ENCODE measurements at regions of chr12 and their contacts with region 1.

Region 1: DNA sequence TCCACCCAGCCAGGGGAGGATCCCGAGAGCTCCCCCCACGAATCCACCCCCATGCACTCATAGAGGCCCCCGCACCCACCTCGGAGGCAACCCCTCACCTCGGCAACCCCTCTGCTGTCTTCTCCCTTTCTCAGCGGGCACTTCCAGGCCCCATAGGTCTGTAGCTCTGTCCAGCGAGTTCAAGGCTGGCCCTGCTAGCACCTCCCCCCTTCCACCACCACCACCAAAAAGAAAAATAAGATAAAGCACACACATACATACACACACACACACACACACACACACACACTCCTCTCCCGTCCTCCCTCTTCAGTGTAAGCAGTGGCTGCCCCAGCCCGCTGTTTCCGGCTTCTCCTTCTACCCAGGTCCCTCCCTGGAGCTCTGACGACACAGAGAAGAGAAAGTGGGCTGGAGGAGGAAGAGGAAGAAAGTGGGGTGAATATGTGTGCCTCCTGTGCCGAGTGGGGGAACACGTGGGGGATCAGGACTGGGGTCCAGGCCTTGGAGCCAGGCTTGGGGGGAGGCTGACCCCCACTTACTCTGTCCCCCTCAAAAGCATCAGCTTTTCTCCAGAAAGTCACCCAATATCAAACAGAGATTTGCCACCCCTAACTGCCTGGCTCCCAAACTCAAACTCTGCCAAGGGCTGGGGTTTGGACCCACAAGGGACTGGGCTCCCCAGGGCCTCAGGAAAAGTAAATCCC is at the start of gene STAT6:
- DNase-seq: peak; percentile 91
- ATAC-seq: peak; percentile 57
- H3K4me3 Mint-ChIP-seq: peak within 1 kb of the TSS; percentile 98
- H3K27ac Mint-ChIP-seq: peak within 1 kb of the TSS; percentile 99
- H3K4me1 Mint-ChIP-seq: peaks cover 48% of the 10 kb centered on the region
- H3K27me3 Mint-ChIP-seq: no peaks in the 10 kb centered on the region
- CTCF ChIP-seq: no peak
- total RNA-seq, gene STAT6: 207 to 209 TPM

Region 2: DNA sequence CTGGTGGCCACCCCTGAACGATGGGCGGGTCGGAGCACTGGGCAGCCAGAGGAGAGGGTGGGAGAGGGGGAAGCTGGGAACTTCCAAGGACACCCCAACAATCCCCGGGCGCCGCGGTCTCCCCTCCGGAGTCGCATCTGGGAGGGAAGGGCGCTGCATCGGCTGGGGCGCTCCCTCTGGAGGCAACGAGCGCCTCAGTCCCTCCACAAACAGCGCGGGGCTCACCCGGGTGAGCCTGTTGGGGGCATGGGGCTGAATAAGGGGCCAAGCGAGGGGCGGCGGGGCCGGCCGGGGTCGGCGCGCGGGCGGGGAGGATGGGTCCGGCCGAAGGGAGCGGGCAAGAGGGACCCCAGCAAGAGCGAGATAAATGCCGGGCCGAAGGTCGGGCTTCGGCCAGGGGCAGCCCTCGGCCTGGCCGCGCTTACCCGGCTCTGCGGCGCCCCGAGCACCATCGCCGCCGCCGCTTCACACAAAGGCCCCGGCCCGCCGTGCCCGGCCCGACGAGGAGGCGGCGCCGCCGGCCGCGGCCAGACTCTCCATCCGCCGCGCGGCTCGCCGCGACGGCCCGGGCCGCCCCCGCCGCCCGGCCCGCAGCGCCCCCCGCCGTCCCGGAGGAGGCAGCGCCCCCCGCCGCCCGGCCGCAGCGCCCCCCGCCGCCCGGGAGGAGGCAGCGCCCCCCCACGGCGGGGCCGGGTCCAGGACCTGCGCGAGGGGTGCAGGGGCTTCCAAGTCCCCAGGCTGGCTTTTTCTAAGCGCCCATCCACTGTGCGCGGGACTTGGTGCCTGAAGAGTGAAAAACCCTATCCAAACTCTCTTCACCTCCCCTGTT is 105.0 kb before region 1 on chr12 and contains the start of gene ZBTB39:
- CTCF ChIA-PET with region 1: interaction called, 123 read pairs
- POLR2A ChIA-PET with region 1: interaction called, 25 read pairs
- intact Hi-C with region 1: loop called (anchors 5 kb)
- DNase-seq: peak; percentile 65
- ATAC-seq: peak; percentile 83
- H3K4me3 Mint-ChIP-seq: peak within 1 kb of the TSS; percentile 83
- H3K27ac Mint-ChIP-seq: peak within 1 kb of the TSS; percentile 80
- H3K4me1 Mint-ChIP-seq: peaks cover 45% of the 10 kb centered on the region
- H3K27me3 Mint-ChIP-seq: no peaks in the 10 kb centered on the region
- CTCF ChIP-seq: peak; percentile 34
- total RNA-seq, gene ZBTB39: 5.1 to 5.5 TPM

Region 3: DNA sequence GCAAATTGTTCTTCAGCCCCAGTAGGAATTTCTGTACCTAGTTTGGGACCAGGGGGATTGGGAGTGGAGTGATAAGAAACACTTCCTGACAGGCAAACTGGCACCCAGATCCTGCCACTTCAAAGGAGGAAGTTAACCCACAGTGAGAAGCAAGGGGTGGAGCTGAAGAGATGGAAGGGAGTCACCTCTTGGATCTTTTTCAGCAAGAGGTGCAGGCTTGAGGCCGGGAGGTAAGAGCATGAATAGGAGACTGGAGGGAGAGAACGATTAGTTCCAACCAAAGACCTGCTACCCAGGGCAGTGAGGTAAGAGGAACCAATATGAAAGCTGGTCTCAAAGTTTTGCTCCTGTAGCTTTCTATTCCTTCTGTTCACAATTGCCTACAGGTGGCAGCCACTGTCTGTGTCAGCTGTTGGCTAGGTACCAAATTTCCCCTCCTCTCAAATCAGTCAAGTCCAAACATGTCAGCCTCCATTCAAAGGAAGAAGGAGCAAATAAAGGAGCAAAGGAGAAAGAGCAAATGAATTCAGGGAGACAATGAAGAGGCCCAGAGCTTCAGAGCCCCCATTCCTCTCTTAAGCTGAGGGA is 80.0 kb before region 1 on chr12:
- CTCF ChIA-PET with region 1: interaction called, 14 read pairs
- POLR2A ChIA-PET with region 1: interaction called, 11 read pairs
- intact Hi-C with region 1: no loop called
- DNase-seq: peak; percentile 39
- ATAC-seq: peak; percentile 42
- H3K4me3 Mint-ChIP-seq: no peak overlapping the region
- H3K27ac Mint-ChIP-seq: peak overlapping the region; percentile 26
- H3K4me1 Mint-ChIP-seq: peaks cover 39% of the 10 kb centered on the region
- H3K27me3 Mint-ChIP-seq: no peaks in the 10 kb centered on the region
- CTCF ChIP-seq: no peak

Region 4: DNA sequence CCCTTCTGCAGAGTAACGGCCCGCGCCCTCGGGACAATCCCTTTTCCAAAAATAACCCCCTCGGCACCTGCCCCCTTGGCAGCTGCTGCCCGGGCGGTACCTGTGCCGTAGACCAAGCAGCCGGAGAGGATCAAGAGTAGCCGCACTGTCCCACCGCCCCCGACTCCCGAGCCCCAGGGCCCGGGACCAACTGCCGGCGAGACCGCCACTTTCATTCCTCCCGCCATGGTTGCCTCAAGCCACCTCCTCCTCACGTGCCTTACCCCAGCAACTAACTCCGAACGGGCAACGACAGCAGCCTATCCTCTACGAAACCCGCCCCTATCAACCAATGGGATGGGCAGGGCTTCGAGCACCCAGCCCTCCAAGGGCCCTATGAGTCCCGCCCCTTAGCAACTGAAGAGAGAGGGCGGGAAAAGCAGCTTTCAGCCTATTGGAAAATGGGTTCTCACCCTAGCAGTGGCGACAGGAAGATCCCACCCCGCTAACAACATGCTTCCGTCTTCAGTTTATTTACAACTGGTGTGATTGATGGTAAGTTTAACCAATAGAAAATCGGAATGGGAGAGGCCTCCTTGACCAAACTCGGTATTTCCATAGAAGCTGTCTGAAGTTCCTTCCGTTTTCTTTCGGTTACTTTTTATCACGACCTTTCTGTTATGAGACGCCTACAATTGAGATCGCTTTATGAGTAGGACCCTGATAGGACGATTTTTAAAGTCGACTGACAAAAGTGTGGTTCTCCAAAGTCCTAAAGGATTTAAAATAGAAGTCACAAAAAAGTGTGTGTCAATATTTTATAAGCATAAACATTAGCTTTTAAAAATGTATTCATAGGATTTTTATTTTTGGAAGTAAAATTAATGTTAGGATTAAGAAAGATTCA is 32.4 kb before region 1 on chr12 and contains the start of gene NEMP1:
- CTCF ChIA-PET with region 1: interaction called, 37 read pairs
- POLR2A ChIA-PET with region 1: interaction called, 60 read pairs
- intact Hi-C with region 1: no loop called
- DNase-seq: peak; percentile 98
- ATAC-seq: peak; percentile 96
- H3K4me3 Mint-ChIP-seq: peak within 1 kb of the TSS; percentile 100
- H3K27ac Mint-ChIP-seq: peak within 1 kb of the TSS; percentile 99
- H3K4me1 Mint-ChIP-seq: peaks cover 31% of the 10 kb centered on the region
- H3K27me3 Mint-ChIP-seq: no peaks in the 10 kb centered on the region
- CTCF ChIP-seq: no peak
- total RNA-seq, gene NEMP1: 76.1 to 80.6 TPM

Region 5: DNA sequence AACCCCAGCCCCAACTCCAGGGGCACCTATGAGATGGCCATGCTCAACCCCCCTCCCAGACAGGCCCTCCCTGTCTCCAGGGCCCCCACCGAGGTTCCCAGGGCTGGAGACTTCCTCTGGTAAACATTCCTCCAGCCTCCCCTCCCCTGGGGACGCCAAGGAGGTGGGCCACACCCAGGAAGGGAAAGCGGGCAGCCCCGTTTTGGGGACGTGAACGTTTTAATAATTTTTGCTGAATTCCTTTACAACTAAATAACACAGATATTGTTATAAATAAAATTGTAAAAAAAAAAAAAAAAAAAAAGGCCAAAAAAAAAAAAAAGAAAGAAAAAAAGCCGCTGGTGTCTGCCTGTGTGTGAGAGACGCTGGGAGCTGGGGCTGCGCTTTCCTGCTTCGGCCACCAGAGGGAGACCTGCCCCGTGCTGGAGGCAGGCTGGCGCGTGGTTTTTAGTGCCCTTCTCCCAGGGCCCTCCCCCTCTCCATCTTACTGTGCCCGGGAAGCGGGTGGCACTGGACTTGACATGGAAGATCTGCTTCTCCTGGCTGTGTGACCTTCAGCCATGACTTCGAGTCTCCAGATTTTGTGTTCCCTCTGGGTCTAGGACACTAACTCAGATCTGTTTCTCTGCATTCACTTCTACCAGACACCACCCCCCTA is 102.0 kb after region 1 on chr12:
- CTCF ChIA-PET with region 1: interaction called, 11 read pairs
- POLR2A ChIA-PET with region 1: interaction called, 3 read pairs
- intact Hi-C with region 1: no loop called
- DNase-seq: peak; percentile 89
- ATAC-seq: peak; percentile 71
- H3K4me3 Mint-ChIP-seq: no peak overlapping the region
- H3K27ac Mint-ChIP-seq: no peak overlapping the region
- H3K4me1 Mint-ChIP-seq: peaks cover 27% of the 10 kb centered on the region
- H3K27me3 Mint-ChIP-seq: peaks cover 38% of the 10 kb centered on the region
- CTCF ChIP-seq: peak; percentile 92

Region 6: DNA sequence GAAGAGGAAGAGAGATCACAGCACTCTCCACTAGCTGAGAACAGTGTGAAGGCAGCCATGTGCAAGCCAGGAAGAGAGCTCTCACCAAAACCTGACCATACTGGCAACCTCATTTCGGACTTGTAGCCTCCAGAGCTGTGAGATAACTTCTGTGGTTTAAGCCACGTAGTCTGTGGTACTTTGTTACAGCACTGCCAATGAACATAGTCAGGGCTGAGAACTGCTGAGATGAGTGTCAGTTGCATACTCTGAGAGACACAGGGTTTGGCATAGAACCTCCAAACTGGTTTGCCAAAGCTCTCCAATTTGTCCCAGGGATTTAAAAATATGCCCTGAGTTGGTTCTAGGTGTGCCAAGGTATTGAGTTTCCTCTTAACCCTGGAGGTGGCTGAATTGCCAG is 1048.8 kb after region 1 on chr12:
- CTCF ChIA-PET with region 1: no interaction called
- POLR2A ChIA-PET with region 1: no interaction called
- intact Hi-C with region 1: no loop called
- DNase-seq: no peak
- ATAC-seq: no peak
- H3K4me3 Mint-ChIP-seq: no peak overlapping the region
- H3K27ac Mint-ChIP-seq: no peak overlapping the region
- H3K4me1 Mint-ChIP-seq: no peaks in the 10 kb centered on the region
- H3K27me3 Mint-ChIP-seq: peaks cover 16% of the 10 kb centered on the region
- CTCF ChIP-seq: no peak